Gastrocnemius medialis (tissue), 4 donors: ENCODE measurements at regions of chr9 and their contacts with region 1.

Region 1: GRCh38 chr9:127916665-127917613 is at the start of gene ST6GALNAC4:
- DNase-seq: peak; percentile 89 to 93
- ATAC-seq: peak; percentile 75 to 84
- H3K4me3 ChIP-seq: peak within 1 kb of the TSS; percentile 58 to 75 (median 70)
- H3K27ac ChIP-seq: peak within 1 kb of the TSS; percentile 67 to 82 (median 73)
- H3K4me1 ChIP-seq: peaks cover 27 to 28% of the 10 kb centered on the region in 2 donors
- H3K27me3 ChIP-seq: no peaks in the 10 kb centered on the region
- CTCF ChIP-seq: no peak
- POLR2A ChIP-seq: peak; percentile 66 to 68
- total RNA-seq, gene ST6GALNAC4: 11.2 to 48.4 (median 23.6) TPM

Region 2: DNA sequence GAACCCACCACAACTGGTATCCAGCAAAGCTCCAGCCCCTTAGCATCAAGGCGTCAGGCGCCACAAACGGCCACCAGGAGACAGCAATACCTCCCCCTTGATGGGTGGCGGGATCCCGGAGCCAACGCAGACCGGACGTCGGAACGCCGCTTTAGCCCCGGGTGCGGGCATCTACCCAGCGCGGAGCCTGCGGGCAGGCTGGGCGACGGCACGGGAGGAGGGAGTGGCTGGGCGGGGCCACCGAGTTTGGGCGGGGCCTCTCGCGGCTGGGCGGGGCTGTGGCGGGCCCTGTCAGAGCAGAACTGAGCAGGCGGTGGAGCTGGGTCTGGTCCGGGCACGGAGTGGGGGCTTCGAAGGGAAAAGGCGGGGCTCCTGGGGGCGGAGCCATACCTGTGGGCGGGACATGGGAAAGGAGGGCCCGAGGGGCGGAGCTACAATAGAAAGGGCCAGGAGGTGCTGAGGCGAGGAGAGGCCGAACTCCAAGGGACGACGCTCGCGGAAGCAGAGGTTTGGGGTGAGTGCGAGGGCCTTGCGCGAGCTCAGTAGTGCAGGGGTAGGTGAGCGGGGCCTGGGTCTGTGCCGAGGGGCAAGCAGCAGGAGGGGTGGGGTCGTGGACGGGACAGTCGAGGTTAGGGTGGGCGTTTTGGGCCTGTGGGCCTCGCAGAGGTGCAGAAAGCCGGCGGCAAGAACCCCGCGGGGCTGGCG is 692.6 kb before region 1 on chr9:
- in situ Hi-C with region 1: loop called in 1 of 4 experiments (anchors 25 kb)
- intact Hi-C with region 1: loop called (anchors 10 kb)
- DNase-seq: peak; percentile 88 to 94
- ATAC-seq: peak; percentile 76 to 80
- H3K4me3 ChIP-seq: peak overlapping the region; percentile 72 to 97 (median 84)
- H3K27ac ChIP-seq: peak overlapping the region; percentile 81 to 97 (median 89)
- H3K4me1 ChIP-seq: peaks cover 0 to 10% of the 10 kb centered on the region in 2 donors
- H3K27me3 ChIP-seq: no peaks in the 10 kb centered on the region
- CTCF ChIP-seq: peak in 2 of 5 experiments; percentile 10 to 20
- POLR2A ChIP-seq: no peak

Region 3: DNA sequence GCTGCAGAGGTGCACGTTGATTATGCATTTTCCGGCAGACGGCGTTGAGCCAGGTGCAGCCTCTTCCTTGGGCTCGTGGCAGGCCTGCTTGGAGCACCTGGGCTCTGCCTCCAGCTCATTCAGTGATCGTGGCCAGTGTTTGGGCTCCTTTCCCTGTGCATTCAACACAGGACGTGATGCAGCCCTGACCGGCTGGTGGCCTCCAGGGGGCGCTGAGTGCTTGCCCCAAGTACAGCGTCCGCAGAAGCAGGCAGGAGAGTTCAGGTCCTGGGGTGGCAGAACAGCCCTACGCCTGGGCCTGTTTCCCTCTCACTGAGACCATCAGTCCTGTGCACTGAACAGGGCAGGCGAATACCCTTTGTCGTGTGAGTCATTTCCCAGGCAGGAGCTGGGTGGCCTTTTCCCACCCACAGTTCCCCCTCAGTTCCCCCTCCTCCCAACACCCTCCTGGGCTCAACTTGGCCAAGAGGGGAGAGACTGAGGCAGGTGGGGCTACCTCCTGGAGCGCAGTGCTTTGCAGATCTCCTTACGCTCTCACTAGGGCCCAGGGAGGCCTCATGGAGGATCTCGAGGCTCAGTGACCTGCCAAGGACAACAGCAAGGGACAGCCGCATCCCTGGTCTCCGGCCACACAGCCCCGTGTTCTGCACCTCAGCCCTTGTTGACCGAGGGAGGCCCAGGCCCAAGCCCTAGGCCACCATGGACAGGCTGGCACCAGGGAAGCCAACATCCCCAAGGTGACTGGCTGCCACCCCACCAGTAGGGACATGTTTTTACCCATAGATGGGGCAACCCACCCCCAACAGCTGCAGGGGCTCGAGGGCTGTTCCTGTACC is 412.8 kb before region 1 on chr9:
- in situ Hi-C with region 1: no loop called
- intact Hi-C with region 1: loop called (anchors 10 kb)
- DNase-seq: peak; percentile 53 to 73
- ATAC-seq: peak; percentile 74 to 85
- H3K4me3 ChIP-seq: no peak overlapping the region
- H3K27ac ChIP-seq: peak overlapping the region in 1 of 4 donors; percentile 20
- H3K4me1 ChIP-seq: no peaks in the 10 kb centered on the region
- H3K27me3 ChIP-seq: no peaks in the 10 kb centered on the region
- CTCF ChIP-seq: peak; percentile 75 to 92 (median 86)
- POLR2A ChIP-seq: no peak

Region 4: GRCh38 chr9:127734747-127735529 is 182.0 kb before region 1 on chr9 and contains the start of gene TOR2A:
- in situ Hi-C with region 1: loop called in 1 of 4 experiments (anchors 10 kb)
- intact Hi-C with region 1: loop called (anchors 1 kb)
- DNase-seq: peak; percentile 95 to 96
- ATAC-seq: peak; percentile 91 to 93
- H3K4me3 ChIP-seq: peak within 1 kb of the TSS; percentile 55 to 85 (median 70)
- H3K27ac ChIP-seq: peak within 1 kb of the TSS; percentile 86 to 98 (median 91)
- H3K4me1 ChIP-seq: peaks cover 14 to 23% of the 10 kb centered on the region in 2 donors
- H3K27me3 ChIP-seq: no peaks in the 10 kb centered on the region
- CTCF ChIP-seq: peak; percentile 95 to 99 (median 98)
- POLR2A ChIP-seq: peak; percentile 91 to 92
- total RNA-seq, gene TOR2A: 3.2 to 10.6 (median 9.6) TPM

Region 5: GRCh38 chr9:127770905-127771569 is 145.9 kb before region 1 on chr9:
- in situ Hi-C with region 1: no loop called
- intact Hi-C with region 1: no loop called
- DNase-seq: peak; percentile 96 to 97
- ATAC-seq: peak; percentile 93 to 94
- H3K4me3 ChIP-seq: peak overlapping the region; percentile 58 to 69 (median 66)
- H3K27ac ChIP-seq: peak overlapping the region; percentile 56 to 81 (median 76)
- H3K4me1 ChIP-seq: peaks cover 11 to 18% of the 10 kb centered on the region in 2 donors
- H3K27me3 ChIP-seq: no peaks in the 10 kb centered on the region
- CTCF ChIP-seq: peak in 1 of 5 experiments; percentile 15
- POLR2A ChIP-seq: peak in 1 of 2 donors; percentile 66

Region 6: DNA sequence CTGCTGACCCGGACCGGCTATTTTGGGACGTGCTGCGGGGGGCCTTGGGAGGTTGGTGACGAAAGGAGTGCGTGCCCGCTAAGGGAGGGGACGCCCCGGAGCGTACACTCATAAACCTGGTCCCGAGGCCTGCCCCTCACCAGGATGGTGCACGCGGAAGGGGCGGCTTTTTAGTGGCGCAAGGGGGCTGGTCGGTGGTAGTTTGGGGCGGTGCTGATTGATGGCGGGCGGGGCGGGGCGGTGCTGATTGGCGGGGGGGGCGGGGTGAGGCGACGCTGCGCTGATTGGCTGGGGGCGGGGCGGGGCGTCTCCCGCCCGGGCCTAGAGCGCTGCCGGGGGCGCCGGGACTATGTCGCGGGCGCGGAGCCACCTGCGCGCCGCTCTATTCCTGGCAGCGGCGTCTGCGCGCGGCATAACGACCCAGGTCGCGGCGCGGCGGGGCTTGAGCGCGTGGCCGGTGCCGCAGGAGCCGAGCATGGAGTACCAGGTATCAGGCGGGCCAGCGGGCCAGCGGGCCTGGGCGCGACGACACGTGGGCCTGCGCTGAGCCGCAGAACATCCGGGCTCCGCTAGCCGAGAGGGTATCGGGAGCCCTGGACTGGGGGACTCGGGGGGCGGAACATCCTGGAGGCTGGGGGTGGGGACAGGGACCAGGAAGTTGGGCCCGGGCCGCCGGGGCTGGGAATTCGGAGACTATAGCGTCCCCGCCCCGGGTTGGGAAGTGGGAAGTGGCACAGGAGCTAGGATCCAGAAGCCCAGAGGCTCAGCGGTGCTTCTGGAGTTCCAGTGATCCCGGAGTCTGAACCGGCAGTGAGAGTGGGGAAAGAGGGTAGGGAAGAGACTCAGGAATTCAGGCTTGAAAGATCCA is 114.1 kb before region 1 on chr9 and contains the start of gene FPGS:
- in situ Hi-C with region 1: no loop called
- intact Hi-C with region 1: loop called (anchors 1 kb)
- DNase-seq: peak; percentile 87 to 88
- ATAC-seq: peak; percentile 74 to 85
- H3K4me3 ChIP-seq: peak within 1 kb of the TSS; percentile 71 to 82 (median 80)
- H3K27ac ChIP-seq: peak within 1 kb of the TSS; percentile 94 to 98 (median 96)
- H3K4me1 ChIP-seq: peaks cover 23 to 41% of the 10 kb centered on the region in 2 donors
- H3K27me3 ChIP-seq: no peaks in the 10 kb centered on the region
- CTCF ChIP-seq: no peak
- POLR2A ChIP-seq: peak; percentile 80 to 86
- total RNA-seq, gene FPGS: 36.4 to 87.6 (median 47.7) TPM

Region 7: DNA sequence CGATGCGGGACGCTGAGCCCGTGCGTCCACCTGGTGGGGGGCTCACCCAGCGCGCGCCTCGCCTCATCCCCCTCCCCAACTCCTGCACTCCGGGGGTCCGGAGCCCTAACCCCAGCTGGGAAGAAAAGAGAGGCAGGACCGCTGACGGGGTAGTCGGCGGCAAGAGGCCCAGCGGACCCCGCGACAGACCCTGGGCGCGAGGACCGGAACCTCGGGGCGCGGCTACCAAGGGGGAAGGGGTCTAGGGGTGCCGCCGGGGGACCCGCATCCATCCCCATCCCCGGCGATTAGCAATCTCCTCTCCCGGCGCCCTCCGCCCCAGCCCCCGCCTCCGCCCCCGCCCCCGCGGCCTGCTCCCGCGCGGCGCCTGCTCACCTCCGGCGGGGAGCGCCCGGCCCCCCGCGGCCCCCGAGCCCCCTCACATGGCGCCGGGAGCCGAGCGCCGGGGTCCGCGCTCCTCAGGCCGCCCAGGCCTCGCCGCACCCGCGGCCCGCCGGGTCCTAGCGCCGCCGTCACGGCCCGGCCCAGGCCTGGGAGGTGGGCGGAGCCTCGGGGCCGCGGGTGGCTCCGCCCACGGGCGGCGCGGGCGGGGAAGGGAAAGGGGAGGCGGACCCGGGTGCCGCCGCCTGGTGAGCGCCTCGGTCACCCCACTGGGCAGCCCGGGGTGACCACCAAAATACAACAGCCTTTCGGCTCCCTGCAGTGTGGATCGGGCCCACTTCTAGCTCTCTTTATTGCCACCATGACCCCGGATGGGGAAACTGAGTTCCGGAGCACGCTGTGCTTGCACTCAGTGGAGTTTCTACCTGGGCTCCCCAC is 17.6 kb before region 1 on chr9 and contains the start of gene ST6GALNAC6:
- in situ Hi-C with region 1: no loop called
- intact Hi-C with region 1: loop called (anchors 1 kb)
- DNase-seq: peak in 1 of 2 donors; percentile 64
- ATAC-seq: peak; percentile 68 to 72
- H3K4me3 ChIP-seq: peak within 1 kb of the TSS; percentile 89 to 94 (median 90)
- H3K27ac ChIP-seq: peak within 1 kb of the TSS; percentile 90 to 97 (median 93)
- H3K4me1 ChIP-seq: peaks cover 30 to 45% of the 10 kb centered on the region in 2 donors
- H3K27me3 ChIP-seq: no peaks in the 10 kb centered on the region
- CTCF ChIP-seq: peak in 1 of 5 experiments; percentile 13
- POLR2A ChIP-seq: peak; percentile 69 to 79
- total RNA-seq, gene ST6GALNAC6: 46.7 to 69.3 (median 56.9) TPM

Region 8: GRCh38 chr9:127943731-127944144 is 26.8 kb after region 1 on chr9:
- in situ Hi-C with region 1: no loop called
- intact Hi-C with region 1: no loop called
- DNase-seq: peak; percentile 46 to 79
- ATAC-seq: peak; percentile 53 to 74
- H3K4me3 ChIP-seq: no peak overlapping the region
- H3K27ac ChIP-seq: no peak overlapping the region
- H3K4me1 ChIP-seq: peaks cover 7 to 12% of the 10 kb centered on the region in 2 donors
- H3K27me3 ChIP-seq: no peaks in the 10 kb centered on the region
- CTCF ChIP-seq: peak; percentile 75 to 90 (median 84)
- POLR2A ChIP-seq: no peak